H1 (cell line): ENCODE measurements at regions of chr4 and their contacts with region 1.

Region 1: GRCh38 chr4:87838890-87839591 is 6.3 kb downstream of the MEPE start:
- DNase-seq: no peak
- H3K4me3 ChIP-seq: no peak overlapping the region
- H3K27ac ChIP-seq: 0 out of 2 replicates have a peak overlapping the region, but pooled peaks have one; percentile 48
- H3K4me1 ChIP-seq: peaks cover 0 to 10% (median 4%) of the 10 kb centered on the region in 4 experiments; a peak in 5 of 7 replicates
- H3K27me3 ChIP-seq: no peaks in the 10 kb centered on the region
- CTCF ChIP-seq: peak in 2 of 3 experiments; percentile 57 to 66; a peak in 3 of 4 replicates
- EP300 ChIP-seq: no peak
- POLR2A ChIP-seq: no peak
- RAD21 ChIP-seq: peak; percentile 83 to 86

Region 2: DNA sequence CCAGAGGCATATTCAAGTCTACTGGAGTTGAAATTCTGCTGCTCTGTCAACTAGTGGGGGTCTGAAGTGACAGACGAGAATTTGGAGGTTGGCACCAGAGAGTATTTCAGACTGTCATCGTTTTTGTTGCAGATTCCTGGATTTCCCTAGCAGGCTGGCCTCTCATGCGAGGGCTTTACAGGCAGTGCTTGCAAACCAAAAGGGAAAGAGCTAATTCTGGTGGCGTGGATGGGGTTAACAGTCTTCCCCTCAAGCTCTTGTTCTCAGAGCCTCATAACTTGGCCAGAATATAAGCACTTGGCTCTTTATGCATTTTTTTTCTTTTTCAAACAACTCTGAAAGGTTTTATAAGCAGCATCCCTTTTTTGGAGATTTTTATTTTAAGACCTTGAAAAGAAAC is 309.9 kb before region 1 on chr4 and contains the start of gene SPARCL1:
- CTCF ChIA-PET with region 1: interaction called, 13 read pairs
- POLR2A ChIA-PET with region 1: no interaction called
- DNase-seq: no peak
- H3K4me3 ChIP-seq: no peak within 1 kb of the TSS
- H3K27ac ChIP-seq: no peak within 1 kb of the TSS
- H3K4me1 ChIP-seq: peaks cover 0 to 9% (median 1%) of the 10 kb centered on the region in 4 experiments; a peak in 2 of 7 replicates
- H3K27me3 ChIP-seq: no peaks in the 10 kb centered on the region
- CTCF ChIP-seq: no peak
- EP300 ChIP-seq: no peak
- POLR2A ChIP-seq: no peak
- RAD21 ChIP-seq: no peak
- total RNA-seq, gene SPARCL1: 0.48 and 0.78 TPM in 2 replicates

Region 3: GRCh38 chr4:87555773-87556619 is 283.0 kb before region 1 on chr4:
- CTCF ChIA-PET with region 1: interaction called, 11 read pairs
- POLR2A ChIA-PET with region 1: no interaction called
- DNase-seq: no peak
- H3K4me3 ChIP-seq: no peak overlapping the region
- H3K27ac ChIP-seq: no peak overlapping the region
- H3K4me1 ChIP-seq: peaks cover 0 to 3% (median 0%) of the 10 kb centered on the region in 4 experiments; a peak in 2 of 7 replicates
- H3K27me3 ChIP-seq: no peaks in the 10 kb centered on the region
- CTCF ChIP-seq: no peak
- EP300 ChIP-seq: no peak
- POLR2A ChIP-seq: no peak
- RAD21 ChIP-seq: no peak

Region 4: DNA sequence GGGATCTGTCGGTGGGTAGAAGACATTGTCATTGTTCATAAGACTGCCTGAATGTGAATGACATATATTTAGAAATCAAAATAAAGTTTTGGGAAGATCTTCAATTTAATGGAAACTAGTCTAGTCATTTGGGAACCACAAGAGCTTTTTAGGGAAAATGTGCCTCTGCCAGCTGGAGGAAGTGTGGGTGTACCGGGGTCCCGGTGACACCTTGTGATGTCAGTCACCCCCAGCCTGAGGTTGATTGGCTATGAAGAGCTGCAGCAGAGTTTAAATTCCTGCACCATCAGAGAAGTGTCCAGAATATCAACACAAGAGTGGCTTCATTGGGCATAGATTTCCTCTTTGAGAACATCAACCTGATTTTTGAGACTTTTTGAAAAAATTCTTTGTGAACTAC is 189.1 kb before region 1 on chr4 and contains the start of gene DMP1:
- CTCF ChIA-PET with region 1: interaction called, 21 read pairs
- POLR2A ChIA-PET with region 1: no interaction called
- DNase-seq: no peak
- H3K4me3 ChIP-seq: no peak within 1 kb of the TSS
- H3K27ac ChIP-seq: no peak within 1 kb of the TSS
- H3K4me1 ChIP-seq: peaks cover 0 to 2% (median 0%) of the 10 kb centered on the region in 4 experiments; a peak in 3 of 7 replicates
- H3K27me3 ChIP-seq: no peaks in the 10 kb centered on the region
- CTCF ChIP-seq: no peak
- EP300 ChIP-seq: no peak
- POLR2A ChIP-seq: no peak
- RAD21 ChIP-seq: no peak
- total RNA-seq, gene DMP1: 0.17 TPM in 1 of 2 replicates, not detected in the other

Region 5: DNA sequence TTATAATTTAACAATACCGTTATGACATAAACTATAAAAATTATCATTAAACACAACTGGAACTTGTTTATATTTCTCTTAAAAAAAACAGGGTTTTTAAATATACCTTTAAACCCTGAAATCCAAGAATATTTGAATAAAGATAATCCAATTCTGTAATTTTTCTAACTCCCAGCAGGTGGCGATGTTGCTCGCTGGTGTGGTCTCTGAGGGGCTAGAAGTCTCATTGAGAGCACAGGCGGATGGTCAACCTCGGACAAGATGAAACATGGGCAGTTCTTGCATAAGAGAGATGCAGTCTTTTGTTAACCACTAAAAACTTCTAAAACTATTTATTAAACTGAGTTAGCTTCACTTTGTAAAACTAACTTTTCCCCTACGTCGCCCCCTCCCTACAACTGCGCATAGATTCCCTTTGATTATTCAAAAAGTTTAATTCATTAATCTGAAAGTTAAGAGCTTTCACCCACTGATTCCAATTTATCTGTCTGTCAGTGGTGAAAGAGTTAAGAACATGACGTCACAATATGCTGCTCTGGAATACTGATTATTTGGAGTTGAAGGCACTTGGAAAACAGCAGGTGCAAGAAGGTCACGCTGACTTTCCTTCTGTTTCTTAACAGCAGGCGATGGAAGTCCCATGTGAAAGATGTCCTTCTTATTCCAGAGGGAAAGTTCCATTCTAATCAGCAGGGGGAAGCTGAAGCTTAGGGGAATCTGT is 159.4 kb before region 1 on chr4:
- CTCF ChIA-PET with region 1: interaction called, 109 read pairs
- POLR2A ChIA-PET with region 1: interaction called, 11 read pairs
- DNase-seq: peak; percentile 47 to 68
- H3K4me3 ChIP-seq: peak overlapping the region in 1 of 4 experiments; percentile 44; a peak in 1 of 8 replicates
- H3K27ac ChIP-seq: peak overlapping the region; percentile 66; the same call in 1 of the 2 replicates
- H3K4me1 ChIP-seq: peaks cover 0 to 11% (median 9%) of the 10 kb centered on the region in 4 experiments; a peak in 4 of 7 replicates
- H3K27me3 ChIP-seq: no peaks in the 10 kb centered on the region
- CTCF ChIP-seq: peak; percentile 38 to 85 (median 58)
- EP300 ChIP-seq: peak in 1 of 2 experiments; percentile 97; a peak in 2 of 3 replicates
- POLR2A ChIP-seq: no peak
- RAD21 ChIP-seq: peak; percentile 93 to 96

Region 6: DNA sequence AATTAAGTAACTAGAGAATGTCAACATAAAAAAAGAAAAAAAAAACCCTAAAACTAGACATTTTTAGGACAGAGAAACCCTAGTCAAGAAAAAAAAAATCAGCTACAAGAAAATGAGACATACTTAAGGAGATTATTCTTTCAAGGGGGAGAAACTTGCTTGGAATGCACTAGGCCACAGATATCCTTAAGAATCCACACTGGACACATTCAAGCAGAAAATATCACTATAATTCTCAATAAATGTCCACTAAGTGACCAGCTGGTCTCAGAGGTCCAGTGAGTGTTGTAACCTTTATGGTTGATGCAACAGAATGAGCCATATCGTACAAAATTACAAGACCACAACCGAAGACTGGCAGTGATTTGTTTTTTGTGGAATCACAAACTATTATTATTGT is 55.3 kb before region 1 on chr4:
- CTCF ChIA-PET with region 1: interaction called, 13 read pairs
- POLR2A ChIA-PET with region 1: no interaction called
- DNase-seq: no peak
- H3K4me3 ChIP-seq: no peak overlapping the region
- H3K27ac ChIP-seq: no peak overlapping the region
- H3K4me1 ChIP-seq: peaks cover 0 to 2% (median 0%) of the 10 kb centered on the region in 4 experiments; a peak in 1 of 7 replicates
- H3K27me3 ChIP-seq: no peaks in the 10 kb centered on the region
- CTCF ChIP-seq: no peak
- EP300 ChIP-seq: no peak
- POLR2A ChIP-seq: no peak
- RAD21 ChIP-seq: no peak